Gastrocnemius medialis (tissue), 4 donors: ENCODE measurements at regions of chr6 and their contacts with region 1.

Region 1: DNA sequence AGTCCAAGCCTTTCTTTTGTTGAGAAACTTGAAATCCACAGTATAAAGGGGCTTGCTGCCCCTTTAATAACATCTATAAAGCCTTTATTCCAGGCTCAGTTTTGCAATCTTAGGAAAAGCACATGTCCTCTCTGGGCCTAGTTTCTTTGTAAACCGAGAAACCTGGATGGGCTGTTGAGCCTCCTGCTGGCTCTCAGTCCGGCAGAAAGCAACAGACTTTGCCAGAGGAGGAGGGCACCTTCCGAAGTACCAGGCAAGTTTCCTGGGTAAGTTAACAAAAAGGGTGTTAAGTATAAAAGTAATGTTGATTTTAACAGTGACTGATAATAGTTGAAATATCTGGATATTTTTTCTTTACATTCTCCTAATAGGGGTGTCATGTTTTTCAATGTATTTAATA is 99.0 kb upstream of the POPDC3 start:
- DNase-seq: peak; percentile 69 to 81
- ATAC-seq: peak; percentile 67 to 71
- H3K4me3 ChIP-seq: peak overlapping the region; percentile 47 to 71 (median 68)
- H3K27ac ChIP-seq: peak overlapping the region; percentile 87 to 98 (median 96)
- H3K4me1 ChIP-seq: peaks cover 52 to 69% of the 10 kb centered on the region in 2 donors
- H3K27me3 ChIP-seq: no peaks in the 10 kb centered on the region
- CTCF ChIP-seq: peak in 1 of 5 experiments; percentile 20
- POLR2A ChIP-seq: peak; percentile 77 to 85

Region 2: GRCh38 chr6:105164418-105164817 is 114.4 kb before region 1 on chr6:
- in situ Hi-C with region 1: no loop called
- intact Hi-C with region 1: loop called (anchors 1 kb)
- DNase-seq: peak; percentile 88 to 92
- ATAC-seq: peak; percentile 93 to 95
- H3K4me3 ChIP-seq: peak overlapping the region in 3 of 4 donors; percentile 16 to 20 (median 19)
- H3K27ac ChIP-seq: peak overlapping the region; percentile 89 to 93 (median 91)
- H3K4me1 ChIP-seq: peaks cover 73 to 81% of the 10 kb centered on the region in 2 donors
- H3K27me3 ChIP-seq: no peaks in the 10 kb centered on the region
- CTCF ChIP-seq: no peak
- POLR2A ChIP-seq: peak; percentile 18 to 69

Region 3: DNA sequence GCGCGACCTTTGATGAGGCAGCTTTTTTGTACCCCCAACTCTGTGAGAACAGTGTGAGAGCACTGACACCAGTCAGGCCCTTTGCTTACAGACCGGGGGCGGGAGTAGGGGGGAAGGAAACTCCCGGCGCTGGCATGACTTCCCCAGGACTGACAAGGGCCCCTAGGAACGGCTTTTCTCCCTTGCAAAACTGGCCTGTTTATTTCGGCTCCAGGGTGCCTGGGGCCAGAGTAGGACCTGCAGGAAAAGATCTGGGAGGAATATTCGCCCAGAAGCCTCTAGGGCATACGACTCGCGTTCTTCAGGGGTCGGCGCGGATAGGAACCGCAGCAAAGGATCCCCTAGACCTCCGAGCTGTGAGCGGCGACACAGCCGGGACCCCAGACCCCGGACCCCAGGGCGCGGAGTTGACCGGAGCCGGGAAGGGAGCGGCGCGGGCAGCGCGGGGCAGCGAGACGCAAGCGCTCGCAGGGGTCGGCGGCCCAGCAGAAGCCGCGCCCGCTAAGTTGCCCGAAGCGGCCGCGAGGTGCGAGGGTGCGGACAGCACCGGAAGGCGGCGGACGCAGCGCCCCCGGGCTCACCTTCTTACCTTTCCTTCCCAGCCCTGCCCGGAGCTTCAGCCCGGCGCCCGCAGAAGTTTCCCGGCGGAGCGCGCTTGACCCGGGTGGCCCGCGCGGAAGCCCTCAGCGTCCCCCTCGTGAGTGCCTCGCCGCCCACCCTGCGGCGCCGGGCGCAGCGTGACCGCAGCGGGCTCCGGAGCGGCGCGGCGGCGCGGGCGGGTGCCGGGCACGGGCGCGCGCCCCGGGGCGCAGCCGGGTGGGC is 99.4 kb before region 1 on chr6 and contains the start of gene POPDC3:
- in situ Hi-C with region 1: loop called in 1 of 4 experiments (anchors 5 kb)
- intact Hi-C with region 1: loop called (anchors 2 kb)
- DNase-seq: peak; percentile 53 to 78
- ATAC-seq: peak; percentile 51 to 63
- H3K4me3 ChIP-seq: peak within 1 kb of the TSS; percentile 69 to 79 (median 77)
- H3K27ac ChIP-seq: peak within 1 kb of the TSS; percentile 96 to 99 (median 99)
- H3K4me1 ChIP-seq: peaks cover 19 to 50% of the 10 kb centered on the region in 2 donors
- H3K27me3 ChIP-seq: no peaks in the 10 kb centered on the region
- CTCF ChIP-seq: peak in 2 of 5 experiments; percentile 9 to 30
- POLR2A ChIP-seq: peak; percentile 28 to 65
- total RNA-seq, gene POPDC3: 105 to 218 (median 179) TPM

Region 4: GRCh38 chr6:105209950-105210706 is 68.7 kb before region 1 on chr6:
- in situ Hi-C with region 1: no loop called
- intact Hi-C with region 1: no loop called
- DNase-seq: no peak
- ATAC-seq: peak; percentile 47 to 69
- H3K4me3 ChIP-seq: no peak overlapping the region
- H3K27ac ChIP-seq: peak overlapping the region; percentile 32 to 68 (median 52)
- H3K4me1 ChIP-seq: peaks cover 11 to 18% of the 10 kb centered on the region in 2 donors
- H3K27me3 ChIP-seq: no peaks in the 10 kb centered on the region
- CTCF ChIP-seq: no peak
- POLR2A ChIP-seq: no peak